ENCODE measurements at regions of chr20 and their contacts with region 1.

Region 1: GRCh38 chr20:24773751-24774201 is 175.3 kb upstream of the CST7 start:
- DNase-seq: no peak
- ATAC-seq: no peak
- H3K4me3 ChIP-seq: no peak overlapping the region
- H3K27ac ChIP-seq: no peak overlapping the region
- H3K4me1 ChIP-seq: peaks cover 0 to 4% (median 0%) of the 10 kb centered on the region in 12 donors
- H3K27me3 ChIP-seq: peaks cover 0 to 9% (median 0%) of the 10 kb centered on the region in 9 donors
- CTCF ChIP-seq: no peak
- POLR2A ChIP-seq: no peak

Region 2: GRCh38 chr20:24160563-24161375 is 613.0 kb before region 1 on chr20:
- intact Hi-C with region 1: loop called in 1 of 10 experiments (anchors 5 kb)
- DNase-seq: peak in 3 of 5 donors; percentile 14 to 42 (median 39)
- ATAC-seq: peak in 3 of 4 donors; percentile 48 to 84 (median 73)
- H3K4me3 ChIP-seq: no peak overlapping the region
- H3K27ac ChIP-seq: no peak overlapping the region
- H3K4me1 ChIP-seq: peaks cover 0 to 5% (median 0%) of the 10 kb centered on the region in 12 donors
- H3K27me3 ChIP-seq: no peaks in the 10 kb centered on the region
- CTCF ChIP-seq: peak; percentile 49 to 88 (median 70)
- POLR2A ChIP-seq: no peak

Region 3: DNA sequence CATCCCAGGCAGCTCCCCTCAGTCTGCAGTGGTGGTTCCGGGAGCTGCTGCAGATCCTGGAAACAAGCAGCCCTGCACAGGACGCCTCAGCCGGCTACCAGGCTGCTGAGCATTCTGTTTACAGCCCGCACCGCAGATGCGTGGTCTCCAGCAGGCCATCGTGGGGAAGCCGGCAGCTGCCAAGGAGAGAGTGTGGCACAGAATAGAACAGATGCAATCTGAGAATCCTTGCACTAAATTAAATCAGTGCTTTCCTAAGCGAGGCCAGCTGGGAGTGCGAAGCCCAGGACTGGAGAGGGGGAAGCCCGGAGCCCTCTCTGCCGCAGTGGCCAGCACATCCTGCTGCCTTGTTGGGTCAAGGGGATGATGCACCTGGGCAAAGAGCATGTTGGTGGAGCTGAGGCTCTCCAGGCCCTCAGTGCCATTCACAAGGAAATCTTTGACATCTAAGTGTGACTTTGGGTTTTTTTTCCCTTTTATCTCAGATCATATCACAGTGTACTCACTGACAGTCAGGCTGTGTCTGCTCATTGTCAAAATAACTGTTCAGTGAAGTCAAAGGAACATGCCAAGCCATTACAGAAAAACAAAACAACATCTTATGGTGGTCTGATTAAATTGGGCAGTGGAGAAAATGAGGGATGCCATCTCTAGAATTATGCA is 186.3 kb before region 1 on chr20:
- intact Hi-C with region 1: no loop called
- DNase-seq: no peak
- ATAC-seq: no peak
- H3K4me3 ChIP-seq: no peak overlapping the region
- H3K27ac ChIP-seq: no peak overlapping the region
- H3K4me1 ChIP-seq: peaks cover 0 to 4% (median 0%) of the 10 kb centered on the region in 12 donors
- H3K27me3 ChIP-seq: no peaks in the 10 kb centered on the region
- CTCF ChIP-seq: no peak
- POLR2A ChIP-seq: no peak

Measured in heart left ventricle (tissue), 16 donors.